ENCODE measurements at regions of chr18 and their contacts with region 1.

Region 1: GRCh38 chr18:38751898-38752297 is 1186.3 kb upstream of the CELF4 start:
- DNase-seq: peak; percentile 35
- H3K4me3 Mint-ChIP-seq: no peak overlapping the region
- H3K27ac Mint-ChIP-seq: no peak overlapping the region
- H3K4me1 Mint-ChIP-seq: peaks cover 10% of the 10 kb centered on the region
- H3K27me3 Mint-ChIP-seq: no peaks in the 10 kb centered on the region

Region 2: DNA sequence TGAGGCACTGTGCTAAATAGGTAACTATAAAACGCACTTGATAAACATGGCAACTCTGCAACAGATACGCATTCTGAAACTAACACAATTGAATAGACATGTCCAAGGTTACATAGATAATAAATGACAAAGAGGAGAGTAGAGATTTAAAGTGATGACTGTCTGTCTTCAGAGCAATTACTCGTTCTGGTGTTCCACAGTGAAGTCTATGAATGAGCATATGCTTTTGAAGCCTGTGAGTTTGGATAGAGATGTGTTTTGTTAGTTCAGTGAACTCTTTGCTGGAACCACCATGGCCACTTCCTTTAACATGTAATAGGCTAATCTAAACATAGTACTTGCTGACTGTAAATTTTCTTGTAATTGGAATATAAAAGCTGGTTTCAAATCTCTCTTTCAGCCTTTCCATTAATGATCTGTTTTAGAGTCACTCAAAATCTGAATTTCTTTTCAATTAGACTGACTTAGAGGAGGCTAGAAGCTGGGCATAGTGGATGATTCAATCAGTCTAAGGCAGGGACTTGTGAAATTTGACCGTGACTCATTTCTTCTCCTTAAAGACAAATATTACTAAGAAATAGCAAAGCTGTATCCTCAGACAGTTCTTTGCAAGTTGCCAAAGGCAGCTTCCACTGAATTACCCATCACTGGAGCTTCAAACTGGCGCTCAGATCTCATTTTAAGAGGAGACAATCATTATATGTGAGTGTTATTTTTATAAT is 56.2 kb before region 1 on chr18:
- CTCF ChIA-PET with region 1: no interaction called
- POLR2A ChIA-PET with region 1: no interaction called
- intact Hi-C with region 1: loop called (anchors 5 kb)
- DNase-seq: no peak
- H3K4me3 Mint-ChIP-seq: no peak overlapping the region
- H3K27ac Mint-ChIP-seq: no peak overlapping the region
- H3K4me1 Mint-ChIP-seq: no peaks in the 10 kb centered on the region
- H3K27me3 Mint-ChIP-seq: no peaks in the 10 kb centered on the region

Region 3: GRCh38 chr18:38790303-38790702 is 38.4 kb after region 1 on chr18:
- CTCF ChIA-PET with region 1: no interaction called
- POLR2A ChIA-PET with region 1: no interaction called
- intact Hi-C with region 1: no loop called
- DNase-seq: no peak
- H3K4me3 Mint-ChIP-seq: no peak overlapping the region
- H3K27ac Mint-ChIP-seq: no peak overlapping the region
- H3K4me1 Mint-ChIP-seq: no peaks in the 10 kb centered on the region
- H3K27me3 Mint-ChIP-seq: no peaks in the 10 kb centered on the region

Region 4: DNA sequence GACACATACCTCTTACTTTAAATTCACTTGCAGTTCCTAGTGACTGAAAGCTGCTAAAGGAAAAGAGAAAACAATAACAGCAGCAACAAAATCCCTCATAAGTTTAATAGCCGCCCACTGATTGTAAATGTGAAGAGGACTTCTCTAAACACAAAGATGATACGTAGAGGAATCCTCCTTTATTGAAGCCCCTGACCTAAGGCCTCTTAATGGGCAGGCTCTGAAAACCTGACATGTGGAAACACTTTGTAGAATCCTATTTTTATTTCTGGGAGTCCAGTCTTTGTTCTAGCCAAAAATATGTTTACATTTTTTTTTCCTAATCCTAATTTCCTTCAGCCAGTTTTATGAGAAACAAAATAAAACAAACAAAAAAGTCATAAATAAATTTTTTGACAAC is 91.4 kb after region 1 on chr18:
- CTCF ChIA-PET with region 1: no interaction called
- POLR2A ChIA-PET with region 1: no interaction called
- intact Hi-C with region 1: no loop called
- DNase-seq: no peak
- H3K4me3 Mint-ChIP-seq: no peak overlapping the region
- H3K27ac Mint-ChIP-seq: no peak overlapping the region
- H3K4me1 Mint-ChIP-seq: no peaks in the 10 kb centered on the region
- H3K27me3 Mint-ChIP-seq: no peaks in the 10 kb centered on the region

Measured in activated CD4-positive, alpha-beta memory T cell treated with anti-CD3 and anti-CD28 coated beads for 36 hours (primary cell).